ENCODE measurements at regions of chr10 and their contacts with region 1.

Region 1: GRCh38 chr10:37010741-37011140 is 114.7 kb upstream of the ANKRD30A start:
- DNase-seq: no peak

Region 2: GRCh38 chr10:36003688-36004087 is 1007.1 kb before region 1 on chr10:
- intact Hi-C with region 1: no loop called
- DNase-seq: no peak

Region 3: DNA sequence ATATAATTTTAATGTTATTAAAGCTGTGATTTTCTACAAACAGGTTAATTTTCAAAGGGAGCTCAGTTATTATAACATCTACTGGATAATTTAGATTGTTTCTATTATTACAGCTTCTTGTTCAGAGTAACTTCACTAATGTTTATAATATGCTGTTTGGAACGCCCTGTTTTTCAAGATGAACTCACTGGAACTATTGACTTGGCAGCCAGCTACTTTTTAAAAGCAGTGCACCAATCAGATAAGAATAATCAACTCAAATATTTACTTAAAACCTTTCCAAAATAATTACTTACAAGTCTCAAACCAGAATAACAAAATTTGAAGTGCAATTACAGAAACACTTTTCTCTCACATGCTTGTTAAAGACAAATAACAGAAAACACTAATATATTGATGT is 614.2 kb before region 1 on chr10:
- intact Hi-C with region 1: loop called in 1 of 2 experiments (anchors 5 kb)
- DNase-seq: no peak

Region 4: GRCh38 chr10:36888929-36889573 is 121.7 kb before region 1 on chr10:
- intact Hi-C with region 1: no loop called
- DNase-seq: no peak

Region 5: GRCh38 chr10:37713642-37714041 is 702.9 kb after region 1 on chr10:
- intact Hi-C with region 1: no loop called
- DNase-seq: no peak

Measured in posterior vena cava (tissue), 2 donors.